ENCODE measurements at regions of chr7 and their contacts with region 1.

Region 1: GRCh38 chr7:135662373-135663114 is at the start of gene STMP1:
- DNase-seq: peak; percentile 94
- H3K4me3 ChIP-seq: peak within 1 kb of the TSS; percentile 68 to 93
- H3K27ac ChIP-seq: peak within 1 kb of the TSS; percentile 76 to 85
- H3K4me1 ChIP-seq: no peaks in the 10 kb centered on the region
- H3K27me3 ChIP-seq: no peaks in the 10 kb centered on the region
- CTCF ChIP-seq: peak in 2 of 4 experiments; percentile 87 to 97
- POLR2A ChIP-seq: peak; percentile 80
- total RNA-seq, gene STMP1: 29.9 to 31.9 TPM

Region 2: DNA sequence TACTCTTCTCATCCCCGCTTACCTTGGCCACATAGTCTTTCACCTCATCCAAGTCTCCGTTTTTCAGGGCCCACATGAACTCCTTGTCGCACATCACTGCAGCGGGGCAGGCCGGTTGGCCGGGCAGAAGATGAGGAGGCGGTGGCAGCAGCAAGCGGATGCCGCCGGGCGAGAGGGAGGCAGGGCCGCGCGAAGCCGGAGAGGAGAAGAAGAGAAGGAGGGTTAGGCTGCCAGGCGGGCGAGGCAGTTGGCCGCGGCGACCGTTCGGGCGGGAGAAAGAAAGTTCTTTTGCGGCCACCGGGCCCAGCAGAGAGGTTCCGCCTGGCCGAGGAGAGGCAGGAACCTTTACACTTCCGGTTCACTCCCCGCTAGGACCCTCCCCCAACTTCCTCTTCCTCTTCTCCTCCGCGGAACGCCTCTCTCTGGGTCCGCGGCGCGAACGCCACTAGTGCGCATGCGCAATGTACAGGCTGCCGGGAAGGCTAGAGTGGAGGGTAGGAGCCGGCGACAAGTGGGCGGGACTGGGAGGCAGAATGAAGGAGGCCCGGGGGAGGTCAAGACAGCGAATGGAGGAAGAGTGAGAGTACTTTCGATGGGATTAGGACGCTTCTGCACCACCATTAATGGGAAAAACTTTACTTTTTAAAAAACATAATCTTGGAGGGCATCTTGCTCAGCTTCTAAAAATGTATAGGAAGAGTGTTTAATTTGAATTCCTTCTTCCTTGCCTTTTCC is 314.6 kb after region 1 on chr7 and contains the start of gene MTPN:
- intact Hi-C with region 1: loop called (anchors 5 kb)
- DNase-seq: peak; percentile 98
- H3K4me3 ChIP-seq: peak within 1 kb of the TSS; percentile 88 to 91
- H3K27ac ChIP-seq: peak within 1 kb of the TSS; percentile 76 to 81
- H3K4me1 ChIP-seq: peaks cover 5% of the 10 kb centered on the region
- H3K27me3 ChIP-seq: no peaks in the 10 kb centered on the region
- CTCF ChIP-seq: no peak
- POLR2A ChIP-seq: peak; percentile 50
- total RNA-seq, gene MTPN: 85.6 to 137 TPM

Region 3: DNA sequence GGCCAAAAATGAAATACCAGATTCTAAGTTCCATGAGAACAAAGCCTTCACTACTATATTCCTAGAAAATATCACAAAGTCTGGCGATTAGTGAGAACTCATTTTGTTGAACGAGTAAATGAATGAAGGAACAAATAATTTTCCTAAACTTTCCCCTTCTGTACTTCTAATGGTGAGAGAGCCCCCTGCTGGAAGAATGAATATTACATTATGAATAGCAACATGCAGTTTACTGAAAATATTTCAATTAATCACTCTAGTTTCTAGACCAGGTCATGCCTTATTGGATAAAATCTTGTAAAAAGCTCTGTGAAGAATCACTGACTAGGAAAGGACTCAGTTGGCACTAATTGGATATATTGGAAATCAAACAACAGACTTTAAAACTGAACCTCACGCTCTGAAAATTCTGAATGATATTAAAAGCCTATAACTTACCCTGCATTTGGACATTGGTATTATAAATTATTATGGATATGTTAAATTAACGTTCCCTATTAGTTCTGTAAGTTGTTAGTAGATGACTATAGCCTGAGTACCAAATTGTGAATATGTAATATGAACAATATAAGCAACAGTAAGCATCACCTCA is 347.0 kb after region 1 on chr7:
- intact Hi-C with region 1: loop called (anchors 5 kb)
- DNase-seq: peak; percentile 9
- H3K4me3 ChIP-seq: no peak overlapping the region
- H3K27ac ChIP-seq: no peak overlapping the region
- H3K4me1 ChIP-seq: no peaks in the 10 kb centered on the region
- H3K27me3 ChIP-seq: no peaks in the 10 kb centered on the region
- CTCF ChIP-seq: peak in 3 of 4 experiments; percentile 81 to 85 (median 84)
- POLR2A ChIP-seq: no peak

Measured in prostate gland (tissue), 2 donors.